ENCODE measurements at regions of chr3 and their contacts with region 1.

Region 1: GRCh38 chr3:38646630-38647029 is 2.9 kb downstream of the SCN5A start:
- DNase-seq: no peak
- H3K4me3 ChIP-seq: no peak overlapping the region
- H3K27ac ChIP-seq: no peak overlapping the region
- H3K4me1 ChIP-seq: no peaks in the 10 kb centered on the region
- H3K27me3 ChIP-seq: peaks cover 0 to 30% of the 10 kb centered on the region in 2 donors
- CTCF ChIP-seq: no peak
- POLR2A ChIP-seq: no peak

Region 2: DNA sequence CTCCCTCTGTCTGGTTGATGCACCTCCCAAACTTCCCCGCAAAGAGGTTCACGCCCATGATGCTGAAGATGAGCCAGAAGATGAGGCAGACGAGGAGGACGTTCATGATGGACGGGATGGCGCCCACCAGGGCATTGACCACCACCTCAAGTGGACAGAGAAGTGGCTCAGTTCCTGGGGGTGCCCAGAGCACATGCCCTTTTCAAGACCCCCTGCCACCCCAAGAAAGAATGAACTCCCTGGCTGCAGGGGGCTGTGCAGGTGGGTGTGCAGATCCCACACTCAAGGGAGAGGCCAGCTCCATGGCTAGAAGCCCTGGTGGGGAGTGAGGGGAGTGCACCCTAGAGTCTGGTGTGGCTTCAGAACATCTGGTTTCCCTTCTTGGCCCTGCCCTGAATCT is 86.3 kb before region 1 on chr3:
- intact Hi-C with region 1: no loop called
- DNase-seq: no peak
- H3K4me3 ChIP-seq: no peak overlapping the region
- H3K27ac ChIP-seq: no peak overlapping the region
- H3K4me1 ChIP-seq: no peaks in the 10 kb centered on the region
- H3K27me3 ChIP-seq: no peaks in the 10 kb centered on the region
- CTCF ChIP-seq: no peak
- POLR2A ChIP-seq: no peak

Region 3: DNA sequence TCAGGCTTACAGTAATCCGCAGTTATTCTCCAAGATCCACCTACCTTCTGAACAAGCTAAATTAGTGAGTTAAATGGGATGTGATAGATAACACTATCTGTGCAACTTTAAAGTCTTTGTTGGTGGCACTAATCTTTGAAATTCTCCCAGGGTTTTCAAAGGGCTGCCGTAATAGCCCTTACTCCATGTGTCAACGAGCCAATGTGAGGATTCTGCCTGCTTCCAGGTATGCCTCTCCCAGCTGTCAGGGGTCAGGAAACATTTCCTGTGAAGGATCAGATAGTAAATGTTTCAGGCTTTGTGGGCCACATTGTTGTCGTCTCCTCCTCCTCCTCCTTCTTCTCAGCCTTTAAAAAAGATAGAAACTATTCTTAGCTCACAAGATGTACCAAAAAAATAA is 23.0 kb after region 1 on chr3:
- intact Hi-C with region 1: loop called (anchors 2 kb)
- DNase-seq: no peak
- H3K4me3 ChIP-seq: no peak overlapping the region
- H3K27ac ChIP-seq: no peak overlapping the region
- H3K4me1 ChIP-seq: no peaks in the 10 kb centered on the region
- H3K27me3 ChIP-seq: no peaks in the 10 kb centered on the region
- CTCF ChIP-seq: no peak
- POLR2A ChIP-seq: no peak

Region 4: GRCh38 chr3:39468108-39468436 is 821.4 kb after region 1 on chr3:
- intact Hi-C with region 1: no loop called
- DNase-seq: no peak
- H3K4me3 ChIP-seq: no peak overlapping the region
- H3K27ac ChIP-seq: no peak overlapping the region
- H3K4me1 ChIP-seq: no peaks in the 10 kb centered on the region
- H3K27me3 ChIP-seq: no peaks in the 10 kb centered on the region
- CTCF ChIP-seq: no peak
- POLR2A ChIP-seq: no peak